ENCODE measurements at regions of chr21 and their contacts with region 1.

Region 1: GRCh38 chr21:33127154-33127893 is 57.4 kb downstream of the OLIG1 start:
- DNase-seq: peak; percentile 84
- H3K4me3 Mint-ChIP-seq: peak overlapping the region; percentile 55
- H3K27ac Mint-ChIP-seq: no peak overlapping the region
- H3K4me1 Mint-ChIP-seq: peaks cover 4% of the 10 kb centered on the region
- H3K27me3 Mint-ChIP-seq: no peaks in the 10 kb centered on the region

Region 2: GRCh38 chr21:32834916-32835235 is 292.4 kb before region 1 on chr21:
- CTCF ChIA-PET with region 1: interaction called, 8 read pairs
- intact Hi-C with region 1: loop called (anchors 2 kb)
- DNase-seq: no peak
- H3K4me3 Mint-ChIP-seq: no peak overlapping the region
- H3K27ac Mint-ChIP-seq: no peak overlapping the region
- H3K4me1 Mint-ChIP-seq: no peaks in the 10 kb centered on the region
- H3K27me3 Mint-ChIP-seq: no peaks in the 10 kb centered on the region

Region 3: DNA sequence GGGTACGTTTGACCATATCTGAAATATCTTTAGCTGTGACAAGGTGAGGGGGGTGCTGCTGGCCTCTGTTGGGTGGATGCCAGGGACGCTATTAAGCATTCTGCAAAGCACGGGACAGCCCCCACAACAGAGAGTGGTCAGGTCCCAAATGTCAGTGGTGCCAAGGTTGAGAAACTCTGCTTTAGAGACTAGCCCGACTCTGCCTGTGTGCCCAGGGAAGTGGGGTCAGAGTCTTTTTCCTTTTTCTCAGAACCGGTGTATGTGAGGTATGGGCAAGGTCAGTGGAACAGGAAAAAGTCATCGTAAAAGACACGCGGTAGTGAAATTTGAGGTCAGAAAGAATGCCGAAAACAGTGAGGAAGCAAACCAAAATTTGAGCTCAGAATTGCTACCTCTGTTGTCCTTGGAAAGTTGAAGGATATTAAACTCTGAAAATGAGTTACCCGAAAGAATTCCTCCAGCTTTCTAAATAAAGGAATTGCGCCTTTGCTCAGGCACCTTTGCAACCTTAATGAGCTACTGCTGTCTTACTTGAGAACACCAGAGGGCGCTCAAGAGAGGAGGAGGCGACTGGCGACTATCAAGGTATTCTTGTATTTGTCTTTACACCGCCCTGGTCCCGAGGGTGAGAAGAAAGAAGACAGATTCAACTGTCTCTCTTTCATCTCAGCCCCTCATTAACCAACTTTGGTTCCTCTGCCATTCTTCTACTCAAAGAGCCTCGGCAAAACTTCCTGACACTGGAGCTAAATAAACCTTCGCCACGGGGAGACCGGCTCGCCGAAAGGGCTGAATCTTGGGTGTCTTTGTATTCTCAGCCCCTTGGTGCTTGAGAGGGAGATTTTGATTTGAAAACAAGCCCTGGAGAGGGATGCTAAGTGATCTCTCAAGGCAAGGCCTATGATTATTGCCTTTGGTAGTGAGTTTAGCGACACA is 187.0 kb before region 1 on chr21:
- CTCF ChIA-PET with region 1: interaction called, 9 read pairs
- intact Hi-C with region 1: loop called (anchors 1 kb)
- DNase-seq: peak; percentile 60
- H3K4me3 Mint-ChIP-seq: no peak overlapping the region
- H3K27ac Mint-ChIP-seq: no peak overlapping the region
- H3K4me1 Mint-ChIP-seq: peaks cover 4% of the 10 kb centered on the region
- H3K27me3 Mint-ChIP-seq: no peaks in the 10 kb centered on the region

Region 4: DNA sequence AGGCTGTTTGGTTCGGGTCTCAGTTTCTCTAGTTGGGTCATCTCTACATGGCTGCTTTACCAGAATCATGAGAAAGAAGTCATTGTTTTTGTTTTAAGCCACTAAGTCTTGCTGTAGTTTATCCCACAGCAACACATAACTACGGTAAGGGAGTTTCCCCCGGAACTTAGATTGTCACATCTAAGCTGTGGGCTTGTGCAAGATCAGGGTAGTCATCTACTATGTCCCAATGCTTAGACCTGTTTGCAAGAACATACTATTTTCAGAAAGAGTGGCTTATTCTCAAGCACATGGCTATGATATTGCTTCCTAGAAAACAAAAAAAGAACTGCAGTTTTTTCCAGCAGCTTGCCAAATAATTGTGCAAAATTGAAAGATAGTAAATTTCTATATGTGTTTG is 119.6 kb before region 1 on chr21:
- CTCF ChIA-PET with region 1: no interaction called
- intact Hi-C with region 1: no loop called
- DNase-seq: no peak
- H3K4me3 Mint-ChIP-seq: no peak overlapping the region
- H3K27ac Mint-ChIP-seq: no peak overlapping the region
- H3K4me1 Mint-ChIP-seq: no peaks in the 10 kb centered on the region
- H3K27me3 Mint-ChIP-seq: peaks cover 2% of the 10 kb centered on the region

Region 5: DNA sequence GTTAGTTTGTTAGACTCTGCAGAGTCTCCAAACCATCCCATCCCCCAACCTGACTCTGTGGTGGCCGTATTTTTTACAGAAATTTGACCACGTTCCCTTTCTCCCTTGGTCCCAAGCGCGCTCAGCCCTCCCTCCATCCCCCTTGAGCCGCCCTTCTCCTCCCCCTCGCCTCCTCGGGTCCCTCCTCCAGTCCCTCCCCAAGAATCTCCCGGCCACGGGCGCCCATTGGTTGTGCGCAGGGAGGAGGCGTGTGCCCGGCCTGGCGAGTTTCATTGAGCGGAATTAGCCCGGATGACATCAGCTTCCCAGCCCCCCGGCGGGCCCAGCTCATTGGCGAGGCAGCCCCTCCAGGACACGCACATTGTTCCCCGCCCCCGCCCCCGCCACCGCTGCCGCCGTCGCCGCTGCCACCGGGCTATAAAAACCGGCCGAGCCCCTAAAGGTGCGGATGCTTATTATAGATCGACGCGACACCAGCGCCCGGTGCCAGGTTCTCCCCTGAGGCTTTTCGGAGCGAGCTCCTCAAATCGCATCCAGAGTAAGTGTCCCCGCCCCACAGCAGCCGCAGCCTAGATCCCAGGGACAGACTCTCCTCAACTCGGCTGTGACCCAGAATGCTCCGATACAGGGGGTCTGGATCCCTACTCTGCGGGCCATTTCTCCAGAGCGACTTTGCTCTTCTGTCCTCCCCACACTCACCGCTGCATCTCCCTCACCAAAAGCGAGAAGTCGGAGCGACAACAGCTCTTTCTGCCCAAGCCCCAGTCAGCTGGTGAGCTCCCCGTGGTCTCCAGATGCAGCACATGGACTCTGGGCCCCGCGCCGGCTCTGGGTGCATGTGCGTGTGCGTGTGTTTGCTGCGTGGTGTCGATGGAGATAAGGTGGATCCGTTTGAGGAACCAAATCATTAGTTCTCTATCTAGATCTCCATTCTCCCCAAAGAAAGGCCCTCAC is 101.6 kb before region 1 on chr21 and contains the start of gene OLIG2:
- CTCF ChIA-PET with region 1: no interaction called
- intact Hi-C with region 1: loop called (anchors 10 kb)
- DNase-seq: no peak
- H3K4me3 Mint-ChIP-seq: peak within 1 kb of the TSS; percentile 33
- H3K27ac Mint-ChIP-seq: no peak within 1 kb of the TSS
- H3K4me1 Mint-ChIP-seq: peaks cover 56% of the 10 kb centered on the region
- H3K27me3 Mint-ChIP-seq: peaks cover 86% of the 10 kb centered on the region
- total RNA-seq, gene OLIG2: not detected

Region 6: GRCh38 chr21:33449616-33450015 is 322.3 kb after region 1 on chr21:
- CTCF ChIA-PET with region 1: interaction called, 5 read pairs
- intact Hi-C with region 1: loop called (anchors 5 kb)
- DNase-seq: no peak
- H3K4me3 Mint-ChIP-seq: no peak overlapping the region
- H3K27ac Mint-ChIP-seq: no peak overlapping the region
- H3K4me1 Mint-ChIP-seq: peaks cover 4% of the 10 kb centered on the region
- H3K27me3 Mint-ChIP-seq: no peaks in the 10 kb centered on the region

Measured in activated naive CD4-positive, alpha-beta T cell treated with anti-CD3 and anti-CD28 coated beads for 36 hours (primary cell).